GM12878 (cell line): ENCODE measurements at regions of chr1 and their contacts with region 1.

Region 1: DNA sequence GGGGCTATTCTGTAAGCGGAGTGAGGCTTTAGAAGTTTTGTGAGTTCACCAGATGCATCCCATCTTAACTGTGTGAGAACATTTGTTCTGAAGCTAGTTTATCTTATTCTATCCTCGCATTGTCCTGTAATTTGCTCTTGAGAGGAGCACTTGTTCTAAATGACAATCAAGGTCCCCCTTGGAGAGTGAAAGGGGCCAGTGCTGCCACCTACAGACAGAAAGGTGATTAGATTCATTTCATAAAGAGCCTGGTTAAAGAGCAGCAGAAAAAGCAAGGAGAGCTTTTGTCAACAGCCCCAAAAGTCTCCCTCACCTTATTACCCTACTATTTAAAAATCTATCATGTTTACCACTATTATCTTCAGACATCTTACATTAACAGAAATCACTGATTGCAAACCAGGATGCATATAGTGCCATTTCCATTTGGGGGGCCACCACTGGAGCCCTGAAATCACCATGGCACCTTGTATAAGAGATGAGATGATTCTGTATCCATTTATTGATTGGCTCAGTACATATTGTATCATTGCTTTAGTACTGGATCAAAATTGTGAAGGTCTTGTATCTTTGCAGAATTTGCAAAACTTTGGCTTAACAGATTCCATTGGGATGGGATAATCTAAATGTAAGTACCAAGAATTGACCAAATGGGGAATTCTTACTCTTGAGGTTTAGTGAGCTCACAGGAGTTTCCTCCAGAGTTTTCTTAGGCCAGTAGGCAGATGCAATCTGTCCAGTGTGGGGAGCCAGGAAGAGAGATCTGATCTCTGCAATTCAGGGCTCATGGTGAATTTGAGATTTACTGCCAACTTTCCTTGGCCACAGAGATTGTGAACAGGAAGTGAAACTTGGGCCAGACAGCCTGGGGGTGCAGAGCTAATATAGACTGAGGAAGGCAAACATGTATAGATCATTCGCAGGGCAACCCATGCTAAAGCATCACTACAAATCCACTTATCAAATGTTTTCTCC is 64.3 kb upstream of the TRABD2B start:
- DNase-seq: no peak
- ATAC-seq: peak; percentile 81
- H3K4me3 ChIP-seq: no peak overlapping the region
- H3K27ac ChIP-seq: no peak overlapping the region
- H3K4me1 ChIP-seq: no peaks in the 10 kb centered on the region
- H3K27me3 ChIP-seq: no peaks in the 10 kb centered on the region
- CTCF ChIP-seq: peak; percentile 50 to 55 (median 50)
- EP300 ChIP-seq: no peak
- POLR2A ChIP-seq: no peak
- RAD21 ChIP-seq: peak; percentile 59

Region 2: GRCh38 chr1:47738560-47739182 is 322.8 kb before region 1 on chr1:
- CTCF ChIA-PET with region 1: interaction called, 5 read pairs
- POLR2A ChIA-PET with region 1: no interaction called
- RAD21 ChIA-PET with region 1: no interaction called
- SMC1A ChIA-PET with region 1: no interaction called
- in situ Hi-C with region 1: no loop called
- intact Hi-C with region 1: loop called (anchors 10 kb)
- DNase-seq: no peak
- ATAC-seq: peak; percentile 67
- H3K4me3 ChIP-seq: no peak overlapping the region
- H3K27ac ChIP-seq: no peak overlapping the region
- H3K4me1 ChIP-seq: no peaks in the 10 kb centered on the region
- H3K27me3 ChIP-seq: peaks cover 0 to 1% of the 10 kb centered on the region in 2 experiments; a peak in 1 of 4 replicates
- CTCF ChIP-seq: peak; percentile 55 to 61 (median 59); a peak in 5 of 6 replicates
- EP300 ChIP-seq: no peak
- POLR2A ChIP-seq: no peak
- RAD21 ChIP-seq: peak; percentile 50

Region 3: GRCh38 chr1:47906009-47906432 is 155.4 kb before region 1 on chr1:
- CTCF ChIA-PET with region 1: no interaction called
- POLR2A ChIA-PET with region 1: no interaction called
- RAD21 ChIA-PET with region 1: no interaction called
- SMC1A ChIA-PET with region 1: no interaction called
- in situ Hi-C with region 1: no loop called
- intact Hi-C with region 1: no loop called
- DNase-seq: no peak
- ATAC-seq: no peak
- H3K4me3 ChIP-seq: no peak overlapping the region
- H3K27ac ChIP-seq: no peak overlapping the region
- H3K4me1 ChIP-seq: no peaks in the 10 kb centered on the region
- H3K27me3 ChIP-seq: peaks cover 2 to 8% of the 10 kb centered on the region in 2 experiments
- CTCF ChIP-seq: no peak
- EP300 ChIP-seq: no peak
- POLR2A ChIP-seq: no peak
- RAD21 ChIP-seq: no peak

Region 4: DNA sequence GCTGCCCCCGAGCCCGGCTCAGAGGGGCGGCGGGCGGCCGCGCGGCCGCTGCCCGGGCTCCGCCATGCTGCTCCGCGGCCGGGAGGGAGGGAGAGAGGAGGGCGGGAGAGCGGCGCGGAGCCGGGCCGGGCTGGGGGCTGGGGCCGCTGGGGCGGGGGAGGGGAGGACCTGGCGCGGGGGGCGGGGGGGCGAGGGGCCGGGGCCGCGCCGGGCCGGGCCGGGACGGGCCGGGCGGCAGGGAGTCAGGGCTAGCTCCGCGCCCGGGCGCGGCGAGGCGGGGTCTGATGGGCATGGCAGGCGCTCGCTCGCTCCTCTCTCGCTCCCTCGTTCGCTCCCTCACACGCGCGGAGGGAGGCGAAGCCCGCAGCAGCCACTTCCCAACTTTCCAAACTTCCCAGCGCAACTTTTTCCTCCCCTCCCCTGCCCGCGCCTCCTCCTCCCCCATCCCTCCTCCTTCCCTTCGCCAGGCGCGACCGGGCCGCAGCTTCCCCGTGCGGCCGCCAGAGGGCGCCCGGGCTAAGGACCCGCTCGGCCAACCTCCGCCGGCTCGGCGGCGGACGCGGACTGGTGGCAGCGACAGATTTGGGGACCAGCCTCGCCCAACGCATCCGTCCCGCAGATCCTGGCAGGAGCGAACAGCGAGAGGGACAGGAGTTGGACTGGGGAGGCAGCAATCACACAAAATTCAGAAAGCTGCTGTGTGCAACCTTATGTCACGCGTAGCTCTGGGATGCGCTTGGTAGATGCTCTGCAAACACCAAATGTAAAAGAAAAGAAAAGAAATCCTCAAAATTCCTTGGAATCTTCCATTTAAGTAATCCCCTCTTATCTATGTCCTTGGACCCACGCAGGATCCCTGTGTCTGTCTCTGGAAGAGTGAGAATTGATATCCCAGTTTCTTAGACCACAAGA is 63.9 kb before region 1 on chr1 and contains the start of gene TRABD2B:
- CTCF ChIA-PET with region 1: interaction called, 38 read pairs
- POLR2A ChIA-PET with region 1: no interaction called
- RAD21 ChIA-PET with region 1: interaction called, 3 read pairs
- SMC1A ChIA-PET with region 1: interaction called, 13 read pairs
- in situ Hi-C with region 1: no loop called
- intact Hi-C with region 1: loop called (anchors 1 kb)
- DNase-seq: no peak
- ATAC-seq: peak; percentile 95
- H3K4me3 ChIP-seq: no peak within 1 kb of the TSS
- H3K27ac ChIP-seq: no peak within 1 kb of the TSS
- H3K4me1 ChIP-seq: no peaks in the 10 kb centered on the region
- H3K27me3 ChIP-seq: peaks cover 0 to 7% of the 10 kb centered on the region in 2 experiments; a peak in 3 of 4 replicates
- CTCF ChIP-seq: peak; percentile 75 to 93 (median 79)
- EP300 ChIP-seq: no peak
- POLR2A ChIP-seq: no peak
- RAD21 ChIP-seq: peak; percentile 59
- polyA plus RNA-seq, gene TRABD2B: not detected